ENCODE measurements at regions of chr4 and their contacts with region 1.

Region 1: DNA sequence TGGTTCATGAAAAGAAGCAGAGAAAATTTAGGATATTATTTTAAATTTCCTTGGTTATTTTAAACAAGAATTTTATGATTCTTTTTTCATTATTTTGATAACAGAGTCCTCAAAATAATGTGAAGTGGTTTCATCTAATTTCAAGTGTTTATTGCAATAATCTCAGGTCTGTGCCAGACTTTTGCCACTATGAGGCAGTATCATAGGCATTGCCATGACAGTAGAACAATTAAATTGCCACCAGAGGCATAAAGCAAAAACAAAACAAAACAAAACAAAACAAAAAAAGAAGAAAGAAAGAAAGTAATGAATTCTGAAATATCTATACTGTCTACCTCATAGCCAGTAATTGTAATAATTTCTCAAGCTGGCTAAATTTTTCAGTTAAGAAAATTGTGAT is 739.2 kb downstream of the KCTD8 start:
- DNase-seq: peak; percentile 3
- ATAC-seq: no peak
- H3K4me3 ChIP-seq: no peak overlapping the region
- H3K27ac ChIP-seq: no peak overlapping the region
- H3K4me1 ChIP-seq: no peaks in the 10 kb centered on the region
- H3K27me3 ChIP-seq: no peaks in the 10 kb centered on the region
- CTCF ChIP-seq: 0 out of 2 replicates have a peak, but pooled peaks have one; percentile 40

Region 2: DNA sequence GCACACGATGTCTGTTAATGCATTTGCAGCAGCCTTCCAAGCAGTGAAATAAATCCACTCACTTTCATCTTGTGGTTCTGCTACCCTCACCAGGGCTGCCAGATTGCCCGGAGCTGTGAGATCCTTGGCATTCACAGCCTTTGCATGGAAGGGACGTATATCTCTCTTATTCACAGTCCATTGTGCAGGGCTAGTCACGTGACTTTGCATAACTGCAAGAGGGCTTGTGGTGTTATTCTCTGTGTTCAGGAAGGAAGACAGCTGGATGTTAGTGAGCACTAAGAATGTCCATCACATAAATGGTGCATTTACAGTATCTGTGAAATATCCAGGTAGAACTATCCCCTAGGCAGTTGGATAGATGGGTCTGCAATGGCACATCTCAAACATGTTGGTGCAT is 1460.5 kb before region 1 on chr4:
- CTCF ChIA-PET with region 1: no interaction called
- POLR2A ChIA-PET with region 1: interaction called, 12 read pairs
- intact Hi-C with region 1: no loop called
- DNase-seq: no peak
- ATAC-seq: no peak
- H3K4me3 ChIP-seq: no peak overlapping the region
- H3K27ac ChIP-seq: no peak overlapping the region
- H3K4me1 ChIP-seq: no peaks in the 10 kb centered on the region
- H3K27me3 ChIP-seq: no peaks in the 10 kb centered on the region
- CTCF ChIP-seq: no peak

Region 3: GRCh38 chr4:43763029-43763610 is 53.7 kb after region 1 on chr4:
- CTCF ChIA-PET with region 1: no interaction called
- POLR2A ChIA-PET with region 1: no interaction called
- intact Hi-C with region 1: no loop called
- DNase-seq: no peak
- ATAC-seq: peak; percentile 27; the same call in 1 of the 2 replicates
- H3K4me3 ChIP-seq: no peak overlapping the region
- H3K27ac ChIP-seq: no peak overlapping the region
- H3K4me1 ChIP-seq: 0 out of 2 replicates have a peak, but pooled peaks cover 5% of the 10 kb centered on the region
- H3K27me3 ChIP-seq: no peaks in the 10 kb centered on the region
- CTCF ChIP-seq: no peak